GM12878 (cell line): ENCODE measurements at regions of chr5 and their contacts with region 1.

Region 1: DNA sequence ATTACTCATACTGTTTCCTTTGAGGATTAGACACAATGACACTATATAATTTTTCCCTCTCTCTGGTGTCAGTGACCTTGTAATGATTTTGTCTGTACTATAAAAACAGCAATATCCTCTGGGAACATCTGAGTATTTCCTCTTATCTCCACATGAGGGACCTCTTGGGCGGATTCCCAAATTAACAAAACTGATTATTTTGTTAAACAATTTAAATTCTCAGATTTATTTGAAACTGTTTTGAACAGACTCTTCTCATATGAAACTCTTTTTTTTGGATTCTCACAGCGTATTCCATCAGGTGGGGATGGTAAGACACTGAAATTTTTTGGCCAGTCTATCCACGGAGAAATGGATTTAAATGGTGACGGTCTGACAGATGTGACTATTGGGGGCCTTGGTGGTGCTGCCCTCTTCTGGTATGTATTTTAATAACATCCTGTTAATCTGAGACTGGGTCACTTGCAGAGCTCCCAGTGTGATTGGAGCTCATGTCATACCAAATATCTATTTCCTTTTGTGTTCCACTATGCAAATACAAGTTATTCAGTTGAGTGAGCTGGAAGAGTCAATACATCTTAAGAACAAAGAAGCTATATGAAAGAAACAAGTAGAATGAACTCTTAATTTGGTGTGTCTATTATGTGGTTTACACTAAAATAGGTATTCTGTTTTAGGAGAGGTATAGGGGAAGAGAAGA is 73.8 kb upstream of the ITGA2 start:
- DNase-seq: peak; percentile 27
- ATAC-seq: peak; percentile 99
- H3K4me3 ChIP-seq: peak overlapping the region; percentile 48; the same call in 1 of the 2 replicates
- H3K27ac ChIP-seq: no peak overlapping the region
- H3K4me1 ChIP-seq: no peaks in the 10 kb centered on the region
- H3K27me3 ChIP-seq: no peaks in the 10 kb centered on the region
- CTCF ChIP-seq: peak; percentile 62 to 65 (median 65)
- EP300 ChIP-seq: no peak
- POLR2A ChIP-seq: no peak
- RAD21 ChIP-seq: peak; percentile 71

Region 2: DNA sequence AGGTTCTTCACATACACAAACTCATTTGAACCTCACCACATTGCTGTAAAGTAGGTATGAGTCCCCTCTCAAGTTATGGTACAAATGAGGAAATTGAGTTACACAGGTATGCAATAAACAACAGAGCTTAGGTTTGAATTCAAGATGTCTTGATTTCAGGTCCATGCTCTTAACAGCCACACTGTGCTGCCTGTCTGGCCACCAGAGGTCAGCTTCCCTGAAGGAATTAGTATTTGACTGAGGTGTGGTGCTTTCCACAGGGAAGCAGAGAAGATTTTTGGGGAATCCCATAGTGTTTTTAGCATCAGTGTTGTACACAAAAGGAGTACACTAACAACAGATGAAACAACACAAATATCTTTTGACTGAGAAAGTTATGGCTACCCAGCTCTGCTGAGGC is 222.0 kb before region 1 on chr5:
- CTCF ChIA-PET with region 1: interaction called, 10 read pairs
- POLR2A ChIA-PET with region 1: no interaction called
- RAD21 ChIA-PET with region 1: interaction called, 4 read pairs
- SMC1A ChIA-PET with region 1: interaction called, 3 read pairs
- in situ Hi-C with region 1: no loop called
- intact Hi-C with region 1: loop called (anchors 1 kb)
- DNase-seq: no peak
- ATAC-seq: peak; percentile 53; the same call in 2 of the 3 replicates
- H3K4me3 ChIP-seq: no peak overlapping the region
- H3K27ac ChIP-seq: no peak overlapping the region
- H3K4me1 ChIP-seq: no peaks in the 10 kb centered on the region
- H3K27me3 ChIP-seq: no peaks in the 10 kb centered on the region
- CTCF ChIP-seq: peak; percentile 37 to 57 (median 38); a peak in 4 of 6 replicates
- EP300 ChIP-seq: no peak
- POLR2A ChIP-seq: no peak
- RAD21 ChIP-seq: peak; percentile 64

Region 3: DNA sequence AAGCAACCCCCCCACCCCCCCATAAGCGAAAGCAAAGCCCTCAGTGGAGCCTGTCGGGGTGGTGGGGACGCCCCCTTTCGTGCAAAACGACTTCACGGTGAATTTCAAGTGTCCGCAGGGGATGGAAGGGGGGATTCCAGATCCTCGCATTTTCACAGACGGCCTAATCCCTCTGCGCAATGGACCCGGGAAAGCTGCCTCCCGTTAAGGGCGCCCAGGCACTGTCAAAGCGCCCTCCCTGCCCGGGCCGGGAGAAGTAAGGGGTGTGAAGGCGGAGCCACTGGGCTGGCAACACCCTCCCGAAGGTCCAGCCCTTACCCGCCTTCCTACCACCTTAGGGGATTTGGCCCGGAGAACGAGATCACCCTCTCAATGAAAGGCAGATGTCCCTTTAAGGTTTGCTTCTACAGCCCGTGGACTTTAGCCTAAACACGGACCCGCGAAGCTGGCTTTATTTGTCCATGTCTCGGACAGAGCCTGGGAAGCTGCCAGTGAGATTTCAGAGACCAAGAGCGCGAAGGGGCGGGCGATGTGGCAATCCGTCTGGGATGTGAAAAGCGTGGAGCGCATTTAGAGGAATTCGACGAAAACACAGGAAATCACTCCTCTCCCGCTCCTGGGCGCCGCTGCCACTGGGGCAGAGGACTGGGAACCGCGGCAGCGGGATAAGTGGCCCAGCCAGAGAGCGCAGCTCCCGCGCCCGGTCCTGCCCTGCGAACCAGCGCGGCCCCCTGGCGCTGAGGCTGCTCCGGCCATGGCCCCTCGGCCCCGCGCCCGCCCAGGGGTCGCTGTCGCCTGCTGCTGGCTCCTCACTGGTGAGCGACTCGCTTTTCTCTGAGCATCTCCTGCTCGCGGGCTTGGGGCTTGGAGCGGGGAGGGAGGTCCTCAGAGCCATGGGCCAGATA is 127.5 kb before region 1 on chr5 and contains the starts of genes ITGA1 and PELO:
- CTCF ChIA-PET with region 1: interaction called, 8 read pairs
- POLR2A ChIA-PET with region 1: no interaction called
- RAD21 ChIA-PET with region 1: interaction called, 8 read pairs
- SMC1A ChIA-PET with region 1: interaction called, 9 read pairs
- in situ Hi-C with region 1: loop called (anchors 5 kb)
- intact Hi-C with region 1: loop called (anchors 1 kb)
- DNase-seq: no peak
- ATAC-seq: peak; percentile 88
- H3K4me3 ChIP-seq: peak within 1 kb of the TSS; percentile 76
- H3K27ac ChIP-seq: no peak within 1 kb of the TSS
- H3K4me1 ChIP-seq: no peaks in the 10 kb centered on the region; the same call in 1 of the 2 replicates
- H3K27me3 ChIP-seq: peaks cover 7 to 11% of the 10 kb centered on the region in 2 experiments; a peak in 3 of 4 replicates
- CTCF ChIP-seq: peak in 1 of 3 experiments; percentile 34; a peak in 2 of 6 replicates
- EP300 ChIP-seq: peak in 1 of 2 experiments; percentile 50; a peak in 1 of 4 replicates
- POLR2A ChIP-seq: no peak
- RAD21 ChIP-seq: no peak
- polyA plus RNA-seq, gene ITGA1: 0.02 to 0.04 TPM
- polyA plus RNA-seq, gene PELO: 6.0 to 6.3 TPM

Region 4: GRCh38 chr5:52794519-52794918 is 120.8 kb before region 1 on chr5:
- CTCF ChIA-PET with region 1: interaction called, 11 read pairs
- POLR2A ChIA-PET with region 1: no interaction called
- RAD21 ChIA-PET with region 1: interaction called, 8 read pairs
- SMC1A ChIA-PET with region 1: interaction called, 8 read pairs
- in situ Hi-C with region 1: loop called (anchors 5 kb)
- intact Hi-C with region 1: no loop called
- DNase-seq: no peak
- ATAC-seq: no peak
- H3K4me3 ChIP-seq: no peak overlapping the region
- H3K27ac ChIP-seq: no peak overlapping the region
- H3K4me1 ChIP-seq: no peaks in the 10 kb centered on the region; the same call in 1 of the 2 replicates
- H3K27me3 ChIP-seq: 0 out of 4 replicates have a peak, but pooled peaks cover 0 to 1% of the 10 kb centered on the region in 2 experiments
- CTCF ChIP-seq: no peak
- EP300 ChIP-seq: no peak
- POLR2A ChIP-seq: no peak
- RAD21 ChIP-seq: no peak

Region 5: DNA sequence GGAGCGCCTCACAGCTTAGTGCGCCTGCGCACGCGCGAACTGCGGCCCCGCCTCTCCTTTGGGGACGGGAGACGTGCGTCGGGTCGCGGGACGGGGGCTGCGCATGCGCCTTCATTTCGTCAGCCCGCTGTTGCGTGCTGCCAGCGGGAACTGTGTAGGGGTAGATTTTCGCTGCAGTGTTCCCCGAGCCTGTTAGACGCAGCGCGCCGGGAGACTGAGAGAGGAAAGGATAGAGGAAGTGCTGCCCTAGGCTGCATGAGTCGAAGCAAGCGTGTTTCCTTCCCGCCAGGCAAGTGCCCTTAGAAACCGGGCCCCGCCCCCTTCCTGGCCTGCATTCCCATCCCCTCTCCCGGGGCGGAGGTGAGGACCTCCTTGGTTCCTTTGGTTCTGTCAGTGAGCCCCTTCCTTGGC is 115.3 kb before region 1 on chr5:
- CTCF ChIA-PET with region 1: interaction called, 11 read pairs
- POLR2A ChIA-PET with region 1: no interaction called
- RAD21 ChIA-PET with region 1: interaction called, 5 read pairs
- SMC1A ChIA-PET with region 1: interaction called, 8 read pairs
- in situ Hi-C with region 1: no loop called
- intact Hi-C with region 1: no loop called
- DNase-seq: peak; percentile 83
- ATAC-seq: peak; percentile 93
- H3K4me3 ChIP-seq: peak overlapping the region; percentile 90
- H3K27ac ChIP-seq: peak overlapping the region; percentile 87
- H3K4me1 ChIP-seq: peaks cover 3% of the 10 kb centered on the region; the same call in 1 of the 2 replicates
- H3K27me3 ChIP-seq: no peaks in the 10 kb centered on the region
- CTCF ChIP-seq: no peak
- EP300 ChIP-seq: no peak
- POLR2A ChIP-seq: peak; percentile 77
- RAD21 ChIP-seq: no peak

Region 6: GRCh38 chr5:52875827-52876226 is 39.5 kb before region 1 on chr5:
- CTCF ChIA-PET with region 1: no interaction called
- POLR2A ChIA-PET with region 1: no interaction called
- RAD21 ChIA-PET with region 1: no interaction called
- SMC1A ChIA-PET with region 1: no interaction called
- in situ Hi-C with region 1: no loop called
- intact Hi-C with region 1: no loop called
- DNase-seq: no peak
- ATAC-seq: no peak
- H3K4me3 ChIP-seq: no peak overlapping the region
- H3K27ac ChIP-seq: no peak overlapping the region
- H3K4me1 ChIP-seq: no peaks in the 10 kb centered on the region
- H3K27me3 ChIP-seq: no peaks in the 10 kb centered on the region
- CTCF ChIP-seq: no peak
- EP300 ChIP-seq: no peak
- POLR2A ChIP-seq: no peak
- RAD21 ChIP-seq: no peak